ENCODE measurements at regions of chr1 and their contacts with region 1.

Region 1: DNA sequence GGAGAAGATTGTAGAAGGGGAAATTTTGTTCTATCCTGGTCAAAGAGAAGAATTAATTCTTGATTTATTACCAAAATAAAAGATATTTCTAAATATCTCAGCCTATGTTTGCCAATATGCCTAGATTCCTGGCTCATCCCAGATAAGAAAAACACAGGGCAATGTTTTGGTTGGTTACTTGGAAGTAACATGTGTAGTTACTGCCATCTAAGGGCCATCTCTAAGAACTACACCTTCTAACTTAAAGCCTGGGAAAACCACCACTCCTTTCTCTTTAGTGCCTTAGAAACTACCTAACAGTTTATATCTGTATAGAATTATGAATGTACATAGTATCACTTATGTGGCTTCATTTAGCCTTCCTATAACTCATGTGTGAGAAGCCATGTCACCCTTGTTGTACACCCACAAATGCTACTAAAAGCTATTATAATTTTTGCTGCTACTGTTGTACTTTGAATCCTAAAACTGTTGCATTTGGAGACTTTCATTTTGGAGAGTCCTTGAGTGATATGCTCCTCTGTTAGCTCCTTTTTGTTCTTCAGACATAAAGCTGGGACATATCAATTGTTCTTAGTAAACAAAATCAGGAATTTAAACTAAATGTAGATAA is 4.5 kb downstream of the AIM2 start:
- DNase-seq: no peak
- H3K4me3 ChIP-seq: no peak overlapping the region
- H3K27ac ChIP-seq: no peak overlapping the region
- H3K4me1 ChIP-seq: no peaks in the 10 kb centered on the region
- H3K27me3 ChIP-seq: no peaks in the 10 kb centered on the region
- CTCF ChIP-seq: peak; percentile 27 to 67 (median 53)
- EP300 ChIP-seq: no peak
- POLR2A ChIP-seq: no peak

Region 2: GRCh38 chr1:157963713-157964112 is 1108.4 kb before region 1 on chr1:
- intact Hi-C with region 1: loop called (anchors 10 kb)
- DNase-seq: peak; percentile 75
- H3K4me3 ChIP-seq: no peak overlapping the region
- H3K27ac ChIP-seq: no peak overlapping the region
- H3K4me1 ChIP-seq: peaks cover 0 to 22% (median 15%) of the 10 kb centered on the region in 4 donors
- H3K27me3 ChIP-seq: no peaks in the 10 kb centered on the region
- CTCF ChIP-seq: peak; percentile 84 to 94 (median 90)
- EP300 ChIP-seq: no peak
- POLR2A ChIP-seq: no peak

Region 3: DNA sequence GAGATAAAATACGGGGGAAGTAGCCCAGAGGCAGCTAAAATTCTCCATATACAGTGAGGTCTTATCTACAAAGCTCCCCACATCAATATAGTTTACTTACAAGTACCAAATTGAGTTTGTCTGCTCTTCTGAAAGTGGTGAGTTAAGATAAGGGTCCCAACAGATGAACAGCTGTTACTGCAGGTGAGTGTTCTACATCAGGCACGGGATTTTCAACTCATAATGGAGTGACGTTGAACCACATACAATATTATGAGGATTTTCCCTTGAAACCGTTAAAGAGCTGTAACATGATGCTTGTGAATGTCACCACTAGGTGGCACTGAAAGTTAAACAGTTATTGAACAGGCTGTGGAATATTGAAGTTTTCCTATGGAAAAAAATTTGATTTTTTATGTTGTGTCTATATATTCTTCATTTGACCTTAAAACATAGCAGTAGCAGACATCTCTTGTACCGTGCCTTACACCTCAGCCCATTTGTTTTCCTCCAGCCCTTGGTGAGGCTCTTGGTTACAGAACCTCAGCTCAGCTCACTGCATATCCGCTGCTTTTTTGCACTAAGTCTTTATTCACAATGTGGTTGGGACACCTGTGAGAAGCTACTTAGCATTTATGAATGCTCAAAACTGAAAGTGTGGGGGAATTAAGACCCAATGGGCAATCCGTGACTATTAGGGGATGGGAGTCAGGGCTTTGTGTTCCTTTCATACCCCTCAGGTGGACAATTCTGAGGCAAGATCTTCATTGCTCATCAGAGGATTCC is 868.2 kb before region 1 on chr1:
- intact Hi-C with region 1: loop called (anchors 1 kb)
- DNase-seq: no peak
- H3K4me3 ChIP-seq: no peak overlapping the region
- H3K27ac ChIP-seq: no peak overlapping the region
- H3K4me1 ChIP-seq: no peaks in the 10 kb centered on the region
- H3K27me3 ChIP-seq: no peaks in the 10 kb centered on the region
- CTCF ChIP-seq: peak; percentile 50 to 73 (median 64)
- EP300 ChIP-seq: no peak
- POLR2A ChIP-seq: no peak

Region 4: DNA sequence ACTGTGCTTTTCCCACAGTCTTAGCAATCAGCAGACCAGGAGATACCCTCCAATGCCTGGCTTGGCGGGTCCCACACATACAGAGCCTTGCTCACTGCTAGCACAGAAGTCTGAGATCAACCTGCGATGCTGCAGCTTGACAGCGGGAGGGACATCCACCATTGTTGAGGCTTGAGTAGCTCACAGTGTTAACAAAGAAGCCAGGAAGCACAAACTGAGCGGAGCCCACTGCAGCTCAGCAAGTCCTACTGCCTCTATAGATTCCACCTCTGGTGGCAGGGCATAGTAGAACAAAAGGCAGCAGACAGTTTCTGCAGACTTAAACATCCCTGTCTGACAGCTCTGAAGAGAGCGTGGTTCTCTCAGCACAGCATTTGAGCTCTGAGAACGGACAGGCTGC is 207.5 kb before region 1 on chr1:
- intact Hi-C with region 1: no loop called
- DNase-seq: no peak
- H3K4me3 ChIP-seq: no peak overlapping the region
- H3K27ac ChIP-seq: no peak overlapping the region
- H3K4me1 ChIP-seq: no peaks in the 10 kb centered on the region
- H3K27me3 ChIP-seq: no peaks in the 10 kb centered on the region
- CTCF ChIP-seq: no peak
- EP300 ChIP-seq: no peak
- POLR2A ChIP-seq: no peak

Region 5: GRCh38 chr1:158998781-158999161 is 73.3 kb before region 1 on chr1:
- intact Hi-C with region 1: loop called (anchors 5 kb)
- DNase-seq: peak; percentile 74
- H3K4me3 ChIP-seq: peak overlapping the region; percentile 36 to 52 (median 44)
- H3K27ac ChIP-seq: peak overlapping the region; percentile 81 to 86 (median 84)
- H3K4me1 ChIP-seq: peaks cover 0 to 32% (median 22%) of the 10 kb centered on the region in 4 donors
- H3K27me3 ChIP-seq: no peaks in the 10 kb centered on the region
- CTCF ChIP-seq: peak; percentile 80 to 92 (median 86)
- EP300 ChIP-seq: no peak
- POLR2A ChIP-seq: no peak

Region 6: GRCh38 chr1:159177273-159177907 is 105.3 kb after region 1 on chr1:
- intact Hi-C with region 1: no loop called
- DNase-seq: no peak
- H3K4me3 ChIP-seq: no peak overlapping the region
- H3K27ac ChIP-seq: no peak overlapping the region
- H3K4me1 ChIP-seq: peaks cover 0 to 12% (median 5%) of the 10 kb centered on the region in 4 donors
- H3K27me3 ChIP-seq: peaks cover 8 to 23% (median 9%) of the 10 kb centered on the region in 3 donors
- CTCF ChIP-seq: no peak
- EP300 ChIP-seq: no peak
- POLR2A ChIP-seq: no peak

Measured in sigmoid colon (tissue), 7 donors.